GM12878 (cell line): ENCODE measurements at regions of chr10 and their contacts with region 1.

Region 1: GRCh38 chr10:124388823-124389612 is 29.7 kb downstream of the OAT start:
- DNase-seq: peak; percentile 40
- ATAC-seq: peak; percentile 100
- H3K4me3 ChIP-seq: 0 out of 2 replicates have a peak overlapping the region, but pooled peaks have one; percentile 7
- H3K27ac ChIP-seq: no peak overlapping the region
- H3K4me1 ChIP-seq: no peaks in the 10 kb centered on the region
- H3K27me3 ChIP-seq: peaks cover 0 to 1% of the 10 kb centered on the region in 2 experiments; a peak in 2 of 4 replicates
- CTCF ChIP-seq: peak; percentile 90 to 97 (median 91); a peak in 5 of 6 replicates
- EP300 ChIP-seq: no peak
- POLR2A ChIP-seq: no peak
- RAD21 ChIP-seq: peak; percentile 97

Region 2: GRCh38 chr10:124025660-124026588 is 363.1 kb before region 1 on chr10:
- CTCF ChIA-PET with region 1: interaction called, 12 read pairs
- POLR2A ChIA-PET with region 1: no interaction called
- RAD21 ChIA-PET with region 1: interaction called, 6 read pairs
- SMC1A ChIA-PET with region 1: interaction called, 8 read pairs
- in situ Hi-C with region 1: no loop called
- intact Hi-C with region 1: loop called (anchors 1 kb)
- DNase-seq: no peak
- ATAC-seq: peak; percentile 65
- H3K4me3 ChIP-seq: no peak overlapping the region
- H3K27ac ChIP-seq: no peak overlapping the region
- H3K4me1 ChIP-seq: no peaks in the 10 kb centered on the region
- H3K27me3 ChIP-seq: peaks cover 0 to 2% of the 10 kb centered on the region in 2 experiments; a peak in 2 of 4 replicates
- CTCF ChIP-seq: peak; percentile 35 to 64 (median 47); a peak in 4 of 6 replicates
- EP300 ChIP-seq: no peak
- POLR2A ChIP-seq: no peak
- RAD21 ChIP-seq: peak; percentile 68

Region 3: GRCh38 chr10:124194199-124194824 is 194.7 kb before region 1 on chr10:
- CTCF ChIA-PET with region 1: interaction called, 12 read pairs
- POLR2A ChIA-PET with region 1: no interaction called
- RAD21 ChIA-PET with region 1: interaction called, 5 read pairs
- SMC1A ChIA-PET with region 1: interaction called, 7 read pairs
- in situ Hi-C with region 1: no loop called
- intact Hi-C with region 1: no loop called
- DNase-seq: peak; percentile 11
- ATAC-seq: no peak
- H3K4me3 ChIP-seq: no peak overlapping the region
- H3K27ac ChIP-seq: no peak overlapping the region
- H3K4me1 ChIP-seq: peaks cover 9% of the 10 kb centered on the region; the same call in 1 of the 2 replicates
- H3K27me3 ChIP-seq: no peaks in the 10 kb centered on the region
- CTCF ChIP-seq: no peak
- EP300 ChIP-seq: no peak
- POLR2A ChIP-seq: no peak
- RAD21 ChIP-seq: no peak

Region 4: GRCh38 chr10:124289851-124290795 is 98.9 kb before region 1 on chr10:
- CTCF ChIA-PET with region 1: interaction called, 9 read pairs
- POLR2A ChIA-PET with region 1: no interaction called
- RAD21 ChIA-PET with region 1: interaction called, 11 read pairs
- SMC1A ChIA-PET with region 1: interaction called, 8 read pairs
- in situ Hi-C with region 1: no loop called
- intact Hi-C with region 1: loop called (anchors 2 kb)
- DNase-seq: peak; percentile 80
- ATAC-seq: peak; percentile 76
- H3K4me3 ChIP-seq: no peak overlapping the region
- H3K27ac ChIP-seq: peak overlapping the region; percentile 68
- H3K4me1 ChIP-seq: peaks cover 55% of the 10 kb centered on the region
- H3K27me3 ChIP-seq: no peaks in the 10 kb centered on the region
- CTCF ChIP-seq: no peak
- EP300 ChIP-seq: peak; percentile 56 to 85
- POLR2A ChIP-seq: no peak
- RAD21 ChIP-seq: no peak

Region 5: GRCh38 chr10:124719213-124719851 is 330.3 kb after region 1 on chr10:
- CTCF ChIA-PET with region 1: no interaction called
- POLR2A ChIA-PET with region 1: no interaction called
- RAD21 ChIA-PET with region 1: no interaction called
- SMC1A ChIA-PET with region 1: no interaction called
- in situ Hi-C with region 1: no loop called
- intact Hi-C with region 1: no loop called
- DNase-seq: peak; percentile 87
- ATAC-seq: peak; percentile 63
- H3K4me3 ChIP-seq: peak overlapping the region; percentile 57; the same call in 1 of the 2 replicates
- H3K27ac ChIP-seq: peak overlapping the region; percentile 71
- H3K4me1 ChIP-seq: peaks cover 69% of the 10 kb centered on the region
- H3K27me3 ChIP-seq: no peaks in the 10 kb centered on the region
- CTCF ChIP-seq: peak; percentile 56 to 72 (median 65)
- EP300 ChIP-seq: peak; percentile 75 to 88; a peak in 3 of 4 replicates
- POLR2A ChIP-seq: no peak
- RAD21 ChIP-seq: peak; percentile 65